Mammary epithelial cell (primary cell): ENCODE measurements at regions of chr10 and their contacts with region 1.

Region 1: GRCh38 chr10:19713800-19714525 is 102.3 kb upstream of the PLXDC2 start:
- DNase-seq: no peak
- H3K4me3 ChIP-seq: no peak overlapping the region
- H3K27ac ChIP-seq: no peak overlapping the region
- H3K4me1 ChIP-seq: no peaks in the 10 kb centered on the region
- H3K27me3 ChIP-seq: no peaks in the 10 kb centered on the region
- CTCF ChIP-seq: peak; percentile 34 to 48

Region 2: GRCh38 chr10:20162123-20162522 is 448.2 kb after region 1 on chr10:
- CTCF ChIA-PET with region 1: interaction called, 13 read pairs
- dilution Hi-C with region 1: no loop called
- in situ Hi-C with region 1: no loop called
- intact Hi-C with region 1: no loop called
- DNase-seq: no peak
- H3K4me3 ChIP-seq: no peak overlapping the region
- H3K27ac ChIP-seq: no peak overlapping the region
- H3K4me1 ChIP-seq: no peaks in the 10 kb centered on the region
- H3K27me3 ChIP-seq: no peaks in the 10 kb centered on the region
- CTCF ChIP-seq: no peak